Cardiac septum (tissue), 1 donor: ENCODE measurements at regions of chr1 and their contacts with region 1.

Region 1: DNA sequence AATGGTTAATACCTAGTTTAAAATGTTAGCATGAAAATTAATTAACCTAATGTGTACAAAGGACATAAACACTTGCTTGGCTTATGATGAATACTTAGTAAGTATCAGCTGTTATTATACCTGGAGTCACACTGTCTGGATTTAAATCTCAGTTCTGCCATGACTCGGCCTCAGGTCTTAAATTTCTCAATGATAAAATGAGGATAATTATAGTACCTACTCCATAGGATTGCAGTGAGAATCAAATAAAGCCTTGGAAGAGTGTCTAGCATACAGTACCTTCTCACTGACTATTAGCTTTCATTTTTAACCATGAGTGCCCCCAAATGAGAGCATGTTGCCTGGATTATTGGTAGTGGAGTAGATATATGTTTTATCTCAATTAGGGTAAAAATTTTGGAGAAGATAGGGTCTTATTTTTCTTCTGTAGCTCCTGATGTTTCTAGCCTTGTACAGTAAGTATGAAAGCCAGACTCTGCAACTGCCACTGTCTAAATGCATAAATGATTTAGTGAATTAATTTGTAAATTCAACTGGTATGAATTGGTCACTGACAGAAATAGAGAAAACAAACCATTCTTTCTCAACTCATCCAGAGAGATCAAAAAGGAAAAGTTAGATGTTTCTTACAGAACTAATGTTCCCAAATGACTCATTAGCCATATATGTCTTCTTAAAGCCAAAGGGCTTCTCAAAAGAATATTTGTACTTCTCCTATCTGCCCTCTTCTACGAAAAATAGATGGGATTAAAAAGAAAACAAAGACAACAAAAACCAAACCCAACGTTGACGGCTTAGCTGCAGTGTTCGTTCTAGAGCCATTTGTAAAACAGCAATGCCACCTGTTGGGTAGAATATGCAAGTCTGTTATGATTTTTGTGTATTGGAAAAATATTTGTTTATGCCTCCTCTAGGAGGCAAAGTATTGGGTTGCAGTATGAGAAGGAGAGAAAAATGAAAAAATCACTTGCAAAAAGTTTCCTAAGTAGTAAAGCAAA is 53.8 kb upstream of the MROH9 start:
- DNase-seq: no peak

Region 2: GRCh38 chr1:170494369-170494768 is 387.2 kb before region 1 on chr1:
- intact Hi-C with region 1: no loop called
- DNase-seq: no peak

Region 3: DNA sequence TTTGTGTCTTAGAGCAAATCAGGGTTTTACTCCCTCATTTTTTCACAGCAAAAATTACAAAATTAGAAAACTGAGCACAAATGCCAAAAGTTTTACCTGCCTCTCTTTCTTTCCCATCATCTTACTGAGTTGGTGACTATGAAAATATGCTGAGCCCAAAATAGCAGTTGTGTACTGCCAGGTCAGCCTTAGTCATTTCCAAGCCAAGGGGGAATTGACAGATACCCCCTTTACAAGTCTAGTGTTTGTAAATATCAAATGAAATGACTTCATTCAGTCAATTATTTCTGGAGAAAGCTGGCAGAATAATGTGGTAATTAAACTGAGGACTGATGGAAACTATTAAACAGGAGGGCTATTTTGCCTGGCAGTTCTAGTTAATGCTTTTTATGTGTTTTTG is 361.0 kb before region 1 on chr1:
- intact Hi-C with region 1: loop called (anchors 10 kb)
- DNase-seq: no peak

Region 4: DNA sequence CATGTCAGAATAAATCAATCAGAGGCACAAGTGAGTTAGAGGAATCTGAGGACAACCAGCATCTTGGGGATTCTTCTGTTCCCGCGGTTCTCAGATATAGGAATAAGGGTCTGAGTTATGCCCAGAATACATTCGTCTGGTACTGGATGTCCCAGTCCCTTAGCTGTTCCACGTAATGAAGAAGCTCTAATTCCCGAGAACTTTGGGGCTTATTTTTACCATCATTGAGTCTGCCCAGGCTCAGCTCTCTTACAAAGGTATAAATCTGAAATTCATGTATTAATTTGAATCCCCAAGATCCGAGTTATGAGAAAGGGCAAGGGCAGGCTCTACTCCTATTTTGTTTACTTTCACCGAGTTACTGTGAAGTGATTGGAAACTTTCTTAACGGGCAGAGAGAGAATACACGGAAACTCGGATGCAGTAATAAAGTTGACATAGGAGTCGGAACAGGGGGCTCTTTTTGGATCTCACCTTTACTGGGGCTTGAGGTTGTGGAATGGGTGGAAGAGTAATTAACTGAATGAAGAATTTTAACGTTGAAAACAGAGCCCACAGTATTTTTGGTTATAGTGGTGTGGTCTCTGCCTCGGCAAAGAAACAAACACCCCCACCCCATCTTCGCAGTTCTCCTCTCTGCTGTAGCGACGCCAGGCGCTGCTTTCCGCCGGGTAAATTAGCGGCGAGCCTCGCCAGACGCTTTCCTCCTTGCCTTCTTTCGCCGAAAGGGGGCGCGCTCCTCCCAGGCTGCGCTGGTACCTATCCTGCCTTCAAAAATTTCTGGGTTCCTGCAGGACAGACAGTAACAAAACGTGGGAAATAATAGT is 210.6 kb before region 1 on chr1:
- intact Hi-C with region 1: loop called (anchors 5 kb)
- DNase-seq: no peak

Region 5: DNA sequence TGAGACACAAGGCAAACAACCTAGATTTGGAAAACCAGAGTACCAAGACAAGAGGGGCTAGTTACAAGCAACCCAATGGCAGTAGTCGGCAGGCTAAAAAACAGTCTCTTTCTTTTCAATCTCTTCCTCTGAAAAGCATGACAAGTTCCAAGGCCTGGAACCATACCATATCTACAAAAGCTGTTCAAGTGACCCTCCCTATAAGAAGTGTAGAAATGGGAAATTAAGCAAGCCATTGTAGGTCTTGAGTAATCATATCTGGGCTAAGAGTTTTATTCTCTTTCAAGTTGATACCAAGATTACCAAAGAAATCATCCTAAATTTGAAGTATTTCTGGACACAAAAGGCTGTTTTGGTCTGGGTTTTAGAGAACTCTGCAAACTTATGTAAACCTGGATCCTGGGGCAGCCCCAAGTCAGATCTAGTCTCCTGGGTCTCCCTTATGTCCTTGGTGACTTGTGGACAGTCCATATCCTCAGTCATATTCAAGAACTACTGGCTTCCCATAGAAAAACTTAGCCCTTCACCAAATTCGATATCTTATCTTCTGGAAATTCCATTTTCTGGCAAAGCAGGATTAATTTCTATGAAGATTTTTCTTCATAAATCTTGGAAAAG is 233.8 kb after region 1 on chr1:
- intact Hi-C with region 1: no loop called
- DNase-seq: no peak